H1 (cell line): ENCODE measurements at regions of chr11 and their contacts with region 1.

Region 1: DNA sequence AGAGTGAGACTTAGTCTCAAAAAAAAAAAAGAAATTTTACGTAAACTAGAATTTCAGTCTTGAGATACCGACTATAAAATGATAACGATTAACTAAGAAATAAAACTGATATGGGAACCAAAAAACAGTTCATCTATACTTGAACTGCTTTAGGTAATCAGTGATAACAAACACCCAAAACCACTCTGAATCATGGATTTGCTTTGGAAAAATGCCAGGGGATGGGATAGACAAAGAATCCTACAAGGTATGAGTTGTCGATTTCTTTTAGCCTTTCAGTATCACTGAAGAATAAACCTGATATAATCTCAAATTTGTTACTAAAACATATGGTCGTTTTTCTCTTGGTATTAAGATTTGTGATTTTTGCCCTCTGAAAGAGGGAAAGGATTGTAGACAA is 13.7 kb downstream of the CSTF3 start:
- DNase-seq: no peak
- H3K4me3 ChIP-seq: no peak overlapping the region
- H3K27ac ChIP-seq: no peak overlapping the region
- H3K4me1 ChIP-seq: peaks cover 0 to 4% (median 2%) of the 10 kb centered on the region in 4 experiments; a peak in 2 of 7 replicates
- H3K27me3 ChIP-seq: no peaks in the 10 kb centered on the region
- CTCF ChIP-seq: no peak
- EP300 ChIP-seq: no peak
- POLR2A ChIP-seq: no peak
- RAD21 ChIP-seq: no peak

Region 2: DNA sequence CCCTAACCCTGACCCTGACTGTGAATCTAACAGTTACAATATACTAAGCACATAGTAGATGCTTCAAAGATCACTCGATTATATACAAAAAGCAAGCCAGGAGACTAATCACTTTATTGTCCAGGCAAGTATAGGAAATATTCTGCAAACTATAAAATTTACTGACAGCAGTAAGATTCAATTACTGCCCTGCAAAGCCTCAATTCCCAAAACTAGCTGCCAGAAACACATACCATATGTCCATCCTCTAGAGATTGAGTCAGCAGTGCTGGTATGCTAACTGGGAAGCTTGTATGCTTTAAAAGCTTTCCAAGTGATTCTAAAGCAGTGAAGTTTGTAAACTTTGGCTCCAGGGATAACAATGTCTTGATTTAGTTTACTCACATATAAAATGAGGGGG is 12.3 kb before region 1 on chr11:
- CTCF ChIA-PET with region 1: interaction called, 12 read pairs
- POLR2A ChIA-PET with region 1: interaction called, 34 read pairs
- DNase-seq: no peak
- H3K4me3 ChIP-seq: no peak overlapping the region
- H3K27ac ChIP-seq: no peak overlapping the region
- H3K4me1 ChIP-seq: peaks cover 0 to 17% (median 3%) of the 10 kb centered on the region in 4 experiments; a peak in 4 of 7 replicates
- H3K27me3 ChIP-seq: no peaks in the 10 kb centered on the region
- CTCF ChIP-seq: no peak
- EP300 ChIP-seq: no peak
- POLR2A ChIP-seq: 0 out of 3 replicates have a peak, but pooled peaks of 1 of the 2 experiments have one; percentile 10
- RAD21 ChIP-seq: no peak